ENCODE measurements at regions of chr7 and their contacts with region 1.

Region 1: DNA sequence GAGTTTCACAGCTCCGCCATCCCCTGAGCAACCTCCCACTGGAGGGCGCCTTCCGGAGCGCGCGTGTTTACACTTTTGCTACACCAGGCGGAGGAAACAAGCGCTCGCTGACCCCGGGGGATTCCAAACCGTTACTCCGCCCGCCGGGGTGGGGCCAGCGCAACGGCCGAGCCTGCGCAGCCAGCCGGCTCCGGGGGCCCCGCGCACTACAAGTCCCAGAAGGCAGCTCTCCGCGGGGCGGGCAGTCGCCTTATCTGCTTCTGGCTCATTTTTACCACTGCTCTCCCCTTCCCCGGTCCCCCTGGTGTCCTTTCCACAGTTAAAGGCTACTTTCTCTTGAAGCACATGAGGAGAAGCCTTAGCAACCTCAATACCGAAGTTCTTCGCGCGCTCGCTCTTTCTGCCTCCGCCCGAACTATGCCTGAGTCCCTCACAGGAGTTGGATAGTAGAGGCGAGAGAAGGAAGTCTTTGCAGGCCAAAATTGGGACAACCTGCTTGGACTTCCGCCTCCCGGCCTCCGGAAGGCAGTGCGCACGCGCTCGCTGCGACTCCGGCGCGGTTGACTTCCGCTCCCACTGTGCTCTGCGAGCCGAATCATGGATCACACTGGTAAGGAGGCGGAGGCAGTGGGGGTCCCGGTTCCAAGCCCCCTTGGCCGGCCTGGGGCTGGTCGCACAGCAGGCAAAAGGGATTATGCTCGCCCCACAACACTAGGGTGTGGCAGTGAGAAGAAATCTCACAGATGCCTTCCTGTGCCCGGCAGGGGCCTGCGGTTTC is at the start of gene CBLL1:
- DNase-seq: peak; percentile 99
- ATAC-seq: peak; percentile 99
- total RNA-seq, gene CBLL1: 20.5 TPM

Region 2: GRCh38 chr7:107471292-107472070 is 272.3 kb before region 1 on chr7:
- intact Hi-C with region 1: loop called (anchors 5 kb)
- DNase-seq: no peak
- ATAC-seq: no peak

Region 3: GRCh38 chr7:108016841-108017775 is 273.4 kb after region 1 on chr7:
- intact Hi-C with region 1: loop called (anchors 10 kb)
- DNase-seq: no peak
- ATAC-seq: peak; percentile 57

Measured in Right ventricle myocardium inferior (tissue), 1 donor.